ENCODE measurements at regions of chr9 and their contacts with region 1.

Region 1: GRCh38 chr9:89597711-89598625 is 6.8 kb upstream of the GADD45G start:
- DNase-seq: peak; percentile 70
- H3K4me3 Mint-ChIP-seq: no peak overlapping the region
- H3K27ac Mint-ChIP-seq: no peak overlapping the region
- H3K4me1 Mint-ChIP-seq: peaks cover under 1% of the 10 kb centered on the region
- H3K27me3 Mint-ChIP-seq: peaks cover 36% of the 10 kb centered on the region

Region 2: DNA sequence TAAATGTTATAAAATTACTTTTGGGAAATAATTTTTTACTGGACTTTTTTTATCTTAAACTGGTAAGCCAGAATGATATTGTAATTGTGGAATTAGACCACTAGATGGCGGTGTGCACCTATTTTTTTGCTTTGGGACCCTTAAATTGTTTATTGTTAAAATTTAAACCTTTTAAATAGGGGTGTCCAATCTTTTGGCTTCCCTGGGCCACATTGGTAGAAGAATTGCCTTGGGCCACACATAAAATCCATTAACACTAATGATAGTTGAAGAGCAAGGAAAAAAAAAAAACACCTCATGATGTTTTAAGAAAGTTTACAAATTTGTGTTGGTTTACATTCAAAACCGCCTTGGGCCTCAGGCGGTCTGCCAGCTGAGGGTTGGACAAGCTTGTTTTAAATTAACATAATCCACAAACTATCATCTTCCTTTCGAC is 21.5 kb before region 1 on chr9:
- CTCF ChIA-PET with region 1: interaction called, 13 read pairs
- POLR2A ChIA-PET with region 1: no interaction called
- DNase-seq: no peak
- H3K4me3 Mint-ChIP-seq: no peak overlapping the region
- H3K27ac Mint-ChIP-seq: no peak overlapping the region
- H3K4me1 Mint-ChIP-seq: peaks cover 16% of the 10 kb centered on the region
- H3K27me3 Mint-ChIP-seq: peaks cover 72% of the 10 kb centered on the region

Region 3: GRCh38 chr9:89919169-89919681 is 321.3 kb after region 1 on chr9:
- CTCF ChIA-PET with region 1: interaction called, 50 read pairs
- POLR2A ChIA-PET with region 1: interaction called, 3 read pairs
- DNase-seq: peak; percentile 62
- H3K4me3 Mint-ChIP-seq: no peak overlapping the region
- H3K27ac Mint-ChIP-seq: no peak overlapping the region
- H3K4me1 Mint-ChIP-seq: peaks cover 14% of the 10 kb centered on the region
- H3K27me3 Mint-ChIP-seq: peaks cover 28% of the 10 kb centered on the region

Region 4: DNA sequence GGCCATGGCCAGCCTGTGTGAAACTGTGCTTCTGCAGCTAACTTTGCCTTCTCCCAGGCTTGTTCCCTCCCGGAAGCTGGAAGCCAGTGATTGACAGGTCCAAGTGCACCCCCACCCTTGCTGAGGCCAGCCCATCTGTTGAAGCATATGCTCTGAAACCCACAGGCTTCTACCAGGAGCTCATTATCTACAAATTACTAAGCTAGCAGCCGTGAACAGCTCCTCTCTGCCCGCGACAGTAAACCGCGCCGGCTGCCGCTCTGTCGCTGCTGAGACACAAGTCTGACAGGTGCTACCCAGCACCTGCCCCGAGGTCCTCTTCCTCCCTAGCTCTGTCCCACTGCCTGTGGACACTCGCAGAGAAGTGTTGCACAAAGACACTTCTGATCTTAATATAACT is 497.7 kb after region 1 on chr9:
- CTCF ChIA-PET with region 1: interaction called, 235 read pairs
- POLR2A ChIA-PET with region 1: interaction called, 4 read pairs
- DNase-seq: no peak
- H3K4me3 Mint-ChIP-seq: no peak overlapping the region
- H3K27ac Mint-ChIP-seq: no peak overlapping the region
- H3K4me1 Mint-ChIP-seq: peaks cover 17% of the 10 kb centered on the region
- H3K27me3 Mint-ChIP-seq: peaks cover 20% of the 10 kb centered on the region

Region 5: DNA sequence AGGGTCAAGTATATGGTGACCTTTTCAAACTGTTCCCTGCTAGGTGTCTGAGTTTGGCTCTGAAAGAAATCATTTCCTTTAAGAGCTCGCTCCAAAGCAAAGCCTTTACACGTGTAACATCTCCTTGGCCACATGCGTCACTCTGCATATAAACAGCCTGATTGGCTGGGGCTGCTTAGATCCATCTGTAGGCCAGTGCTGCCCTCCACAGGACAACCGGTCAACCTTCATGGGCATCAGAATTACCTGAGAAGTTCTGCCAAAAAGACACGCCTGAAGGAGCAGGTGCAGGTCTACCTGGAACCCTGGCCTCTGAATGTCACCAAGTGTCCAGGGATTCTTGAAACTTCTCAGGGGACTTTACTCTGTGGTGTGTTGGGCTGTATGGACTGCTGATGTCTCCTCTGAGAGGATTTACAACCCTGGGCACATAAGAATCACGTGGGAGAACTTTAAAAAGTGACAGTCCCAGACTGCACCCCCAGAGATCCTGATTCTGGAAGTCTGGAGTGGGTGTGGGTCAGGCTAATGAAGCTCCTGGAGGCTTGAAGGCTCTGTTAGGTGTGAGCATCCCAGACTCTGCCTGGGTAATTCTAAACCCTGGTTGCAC is 504.4 kb after region 1 on chr9:
- CTCF ChIA-PET with region 1: interaction called, 235 read pairs
- POLR2A ChIA-PET with region 1: interaction called, 7 read pairs
- DNase-seq: peak; percentile 84
- H3K4me3 Mint-ChIP-seq: no peak overlapping the region
- H3K27ac Mint-ChIP-seq: no peak overlapping the region
- H3K4me1 Mint-ChIP-seq: peaks cover 14% of the 10 kb centered on the region
- H3K27me3 Mint-ChIP-seq: peaks cover 2% of the 10 kb centered on the region

Region 6: GRCh38 chr9:90121762-90122161 is 523.8 kb after region 1 on chr9:
- CTCF ChIA-PET with region 1: interaction called, 21 read pairs
- POLR2A ChIA-PET with region 1: no interaction called
- DNase-seq: no peak
- H3K4me3 Mint-ChIP-seq: no peak overlapping the region
- H3K27ac Mint-ChIP-seq: no peak overlapping the region
- H3K4me1 Mint-ChIP-seq: no peaks in the 10 kb centered on the region
- H3K27me3 Mint-ChIP-seq: peaks cover 29% of the 10 kb centered on the region

Region 7: GRCh38 chr9:90142580-90142979 is 544.6 kb after region 1 on chr9:
- CTCF ChIA-PET with region 1: interaction called, 11 read pairs
- POLR2A ChIA-PET with region 1: no interaction called
- DNase-seq: peak; percentile 49
- H3K4me3 Mint-ChIP-seq: no peak overlapping the region
- H3K27ac Mint-ChIP-seq: no peak overlapping the region
- H3K4me1 Mint-ChIP-seq: no peaks in the 10 kb centered on the region
- H3K27me3 Mint-ChIP-seq: peaks cover 52% of the 10 kb centered on the region